Heart right ventricle (tissue), 16 donors: ENCODE measurements at regions of chr2 and their contacts with region 1.

Region 1: GRCh38 chr2:228377533-228377932 is 196.0 kb upstream of the SPHKAP start:
- DNase-seq: no peak
- ATAC-seq: peak in 6 of 8 donors; percentile 15 to 63 (median 38)
- H3K4me3 ChIP-seq: no peak overlapping the region
- H3K27ac ChIP-seq: peak overlapping the region in 7 of 10 donors; percentile 42 to 81 (median 66)
- H3K4me1 ChIP-seq: peaks cover 0 to 23% (median 0%) of the 10 kb centered on the region in 9 donors
- H3K27me3 ChIP-seq: no peaks in the 10 kb centered on the region
- CTCF ChIP-seq: no peak

Region 2: DNA sequence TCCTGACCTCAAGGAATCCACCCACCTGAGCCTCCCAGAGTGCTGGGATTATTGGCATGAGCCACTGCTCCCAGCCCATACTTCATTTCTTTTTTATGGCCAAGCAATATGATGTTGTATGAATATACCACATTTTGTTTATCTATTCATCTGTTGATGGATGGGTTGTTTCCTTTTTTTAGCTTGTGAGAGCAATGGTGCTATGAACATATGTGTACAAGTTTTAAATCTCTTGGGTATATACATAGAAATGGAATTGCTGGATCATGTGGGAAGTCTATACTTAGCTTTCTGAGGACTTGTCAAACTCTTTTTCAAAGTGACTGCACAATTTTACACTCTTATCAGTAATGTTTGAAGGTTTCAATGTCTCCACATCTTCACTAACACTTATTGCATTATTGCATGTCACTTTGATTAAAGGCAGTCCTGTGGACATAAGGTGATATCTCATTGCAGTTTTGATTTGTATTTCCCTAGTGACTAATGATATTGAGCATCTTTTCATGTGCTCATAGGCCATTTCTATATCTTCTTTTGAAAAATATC is 28.9 kb before region 1 on chr2:
- intact Hi-C with region 1: loop called in 1 of 10 experiments (anchors 2 kb)
- DNase-seq: no peak
- ATAC-seq: peak; percentile 67 to 97 (median 94)
- H3K4me3 ChIP-seq: no peak overlapping the region
- H3K27ac ChIP-seq: peak overlapping the region in 8 of 10 donors; percentile 7 to 77 (median 55)
- H3K4me1 ChIP-seq: peaks cover 0 to 11% (median 0%) of the 10 kb centered on the region in 9 donors
- H3K27me3 ChIP-seq: no peaks in the 10 kb centered on the region
- CTCF ChIP-seq: no peak